PC-9 (cell line): ENCODE measurements at regions of chr2 and their contacts with region 1.

Region 1: GRCh38 chr2:200742426-200742825 is 69.3 kb upstream of the BZW1 start:
- DNase-seq: no peak
- H3K4me3 ChIP-seq: no peak overlapping the region
- H3K27ac ChIP-seq: peak overlapping the region; percentile 84
- H3K4me1 ChIP-seq: peaks cover 25% of the 10 kb centered on the region
- H3K27me3 ChIP-seq: no peaks in the 10 kb centered on the region
- CTCF ChIP-seq: no peak

Region 2: GRCh38 chr2:199973703-199974102 is 768.7 kb before region 1 on chr2:
- CTCF ChIA-PET with region 1: interaction called, 11 read pairs
- POLR2A ChIA-PET with region 1: no interaction called
- intact Hi-C with region 1: no loop called
- DNase-seq: no peak
- H3K4me3 ChIP-seq: no peak overlapping the region
- H3K27ac ChIP-seq: peak overlapping the region; percentile 91; the same call in 1 of the 2 replicates
- H3K4me1 ChIP-seq: peaks cover 37% of the 10 kb centered on the region
- H3K27me3 ChIP-seq: no peaks in the 10 kb centered on the region
- CTCF ChIP-seq: peak; percentile 83